Mammary epithelial cell (primary cell): ENCODE measurements at regions of chr21 and their contacts with region 1.

Region 1: DNA sequence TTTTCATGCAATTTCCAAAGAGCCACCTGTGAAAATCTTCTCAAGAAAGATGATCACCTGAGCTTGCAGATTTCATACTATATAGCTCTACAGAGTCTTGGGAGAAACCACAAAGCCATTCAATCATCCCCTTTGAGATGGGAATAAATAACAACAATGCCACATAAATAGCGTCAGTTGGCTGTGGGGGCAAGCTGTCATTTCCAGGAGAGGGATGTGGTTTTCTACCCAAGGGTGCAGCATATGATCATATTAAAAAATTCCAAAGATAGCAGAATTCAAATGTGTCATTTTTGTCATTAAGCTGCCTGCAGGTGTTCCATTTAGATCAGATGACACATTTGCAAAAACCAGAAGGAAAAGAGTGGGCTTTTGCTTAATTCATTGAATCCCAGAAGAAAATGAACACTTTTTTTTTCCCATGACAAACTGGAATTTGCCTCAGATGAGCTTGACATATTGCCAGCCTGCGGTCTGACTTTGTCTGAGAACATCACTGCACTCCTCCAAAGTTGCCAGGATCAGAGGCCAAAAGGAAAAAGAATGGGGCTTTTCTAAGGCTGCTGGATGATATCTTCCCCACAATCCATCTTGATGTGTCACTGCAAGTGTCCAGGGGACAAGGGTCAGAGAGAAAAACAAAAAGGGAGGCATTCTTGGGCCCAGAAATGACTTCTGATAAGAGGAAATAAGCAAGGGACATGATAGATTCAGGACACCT is 314.1 kb upstream of the USP25 start:
- DNase-seq: no peak
- H3K4me3 ChIP-seq: no peak overlapping the region
- H3K27ac ChIP-seq: no peak overlapping the region
- H3K4me1 ChIP-seq: peaks cover 7% of the 10 kb centered on the region
- H3K27me3 ChIP-seq: no peaks in the 10 kb centered on the region
- CTCF ChIP-seq: no peak

Region 2: DNA sequence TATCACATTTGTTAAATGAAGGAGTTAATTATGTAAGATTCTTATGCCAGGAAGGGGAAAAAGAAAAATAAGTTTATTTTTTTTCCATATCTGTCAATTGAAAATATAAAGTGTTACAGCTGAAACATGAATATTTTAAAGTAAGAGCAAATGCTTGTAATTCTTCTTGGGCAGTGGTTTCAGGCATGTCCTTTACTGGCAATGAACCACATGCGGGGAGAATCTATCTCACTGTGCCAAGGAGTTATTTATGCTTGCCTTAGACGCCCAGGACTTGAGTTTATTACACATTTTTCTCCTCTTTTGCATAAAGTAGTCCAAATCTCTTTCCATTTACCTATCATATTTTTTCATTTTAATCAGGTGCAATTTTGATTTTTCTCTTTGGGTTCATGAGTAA is 143.1 kb before region 1 on chr21:
- CTCF ChIA-PET with region 1: interaction called, 12 read pairs
- dilution Hi-C with region 1: no loop called
- in situ Hi-C with region 1: no loop called
- intact Hi-C with region 1: no loop called
- DNase-seq: no peak
- H3K4me3 ChIP-seq: no peak overlapping the region
- H3K27ac ChIP-seq: no peak overlapping the region
- H3K4me1 ChIP-seq: peaks cover 11% of the 10 kb centered on the region
- H3K27me3 ChIP-seq: no peaks in the 10 kb centered on the region
- CTCF ChIP-seq: no peak

Region 3: GRCh38 chr21:15355066-15355465 is 60.6 kb before region 1 on chr21:
- CTCF ChIA-PET with region 1: no interaction called
- dilution Hi-C with region 1: loop called (anchors 5 kb)
- in situ Hi-C with region 1: no loop called
- intact Hi-C with region 1: no loop called
- DNase-seq: no peak
- H3K4me3 ChIP-seq: no peak overlapping the region
- H3K27ac ChIP-seq: no peak overlapping the region
- H3K4me1 ChIP-seq: no peaks in the 10 kb centered on the region
- H3K27me3 ChIP-seq: no peaks in the 10 kb centered on the region
- CTCF ChIP-seq: no peak

Region 4: DNA sequence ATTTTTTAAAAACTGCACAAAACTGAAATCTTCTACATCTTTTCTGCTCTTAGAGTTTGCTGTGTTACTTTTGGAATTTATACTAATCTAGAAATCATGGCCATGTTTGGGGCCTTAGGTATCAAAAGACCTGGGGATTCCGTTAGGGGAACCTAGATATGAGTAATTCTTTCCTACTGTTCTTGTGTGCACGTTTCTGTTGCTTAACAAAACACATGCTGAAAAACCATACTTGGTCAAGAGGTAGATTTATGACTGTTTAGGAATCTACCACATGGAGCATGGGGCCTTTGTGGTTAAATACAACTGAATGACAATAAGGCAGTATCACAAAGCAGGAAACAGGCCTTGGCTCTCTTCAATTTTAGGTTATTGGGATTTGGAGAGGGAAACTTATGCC is 22.2 kb after region 1 on chr21:
- CTCF ChIA-PET with region 1: no interaction called
- dilution Hi-C with region 1: no loop called
- in situ Hi-C with region 1: no loop called
- intact Hi-C with region 1: no loop called
- DNase-seq: peak; percentile 84
- H3K4me3 ChIP-seq: no peak overlapping the region
- H3K27ac ChIP-seq: no peak overlapping the region
- H3K4me1 ChIP-seq: no peaks in the 10 kb centered on the region
- H3K27me3 ChIP-seq: no peaks in the 10 kb centered on the region
- CTCF ChIP-seq: no peak